Vagina (tissue), 2 donors: ENCODE measurements at regions of chr14 and their contacts with region 1.

Region 1: GRCh38 chr14:63543000-63543825 is at the start of gene PPP2R5E:
- DNase-seq: peak; percentile 99
- H3K4me3 ChIP-seq: peak within 1 kb of the TSS; percentile 76 to 84
- H3K27ac ChIP-seq: peak within 1 kb of the TSS; percentile 80
- H3K4me1 ChIP-seq: peaks cover 18% of the 10 kb centered on the region
- H3K27me3 ChIP-seq: no peaks in the 10 kb centered on the region
- CTCF ChIP-seq: peak in 1 of 3 experiments; percentile 3
- POLR2A ChIP-seq: peak in 1 of 2 donors; percentile 71
- total RNA-seq, gene PPP2R5E: 22.6 TPM

Region 2: DNA sequence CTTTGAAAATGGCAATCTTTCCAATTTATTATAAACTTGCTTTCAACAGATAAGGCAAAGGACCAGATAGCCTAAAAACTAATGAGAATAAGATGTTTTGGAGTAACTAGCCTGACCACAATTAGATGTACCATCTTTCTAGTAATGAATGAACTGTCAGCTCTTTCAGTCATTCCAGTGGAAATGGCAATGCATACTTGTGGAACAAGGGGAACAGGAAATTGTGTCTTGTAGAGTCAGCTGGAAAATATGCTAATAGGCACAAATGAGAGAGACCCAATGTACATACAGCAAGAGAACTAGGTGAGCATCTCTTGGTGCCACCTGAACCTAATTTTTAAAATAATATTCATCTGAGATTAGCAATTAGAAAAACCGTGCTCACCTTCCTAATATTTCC is 148.4 kb before region 1 on chr14:
- intact Hi-C with region 1: loop called (anchors 1 kb)
- DNase-seq: no peak
- H3K4me3 ChIP-seq: no peak overlapping the region
- H3K27ac ChIP-seq: no peak overlapping the region
- H3K4me1 ChIP-seq: no peaks in the 10 kb centered on the region
- H3K27me3 ChIP-seq: no peaks in the 10 kb centered on the region
- CTCF ChIP-seq: no peak
- POLR2A ChIP-seq: no peak

Region 3: GRCh38 chr14:63641473-63642228 is 98.4 kb after region 1 on chr14 and contains the start of gene WDR89:
- intact Hi-C with region 1: loop called (anchors 5 kb)
- DNase-seq: peak; percentile 98 to 100
- H3K4me3 ChIP-seq: peak within 1 kb of the TSS; percentile 62 to 70
- H3K27ac ChIP-seq: peak within 1 kb of the TSS; percentile 95
- H3K4me1 ChIP-seq: peaks cover 19% of the 10 kb centered on the region
- H3K27me3 ChIP-seq: no peaks in the 10 kb centered on the region
- CTCF ChIP-seq: peak in 1 of 3 experiments; percentile 78
- POLR2A ChIP-seq: peak in 1 of 2 donors; percentile 25
- total RNA-seq, gene WDR89: 7.4 TPM

Region 4: GRCh38 chr14:63686951-63687350 is 143.7 kb after region 1 on chr14:
- intact Hi-C with region 1: no loop called
- DNase-seq: no peak
- H3K4me3 ChIP-seq: no peak overlapping the region
- H3K27ac ChIP-seq: no peak overlapping the region
- H3K4me1 ChIP-seq: no peaks in the 10 kb centered on the region
- H3K27me3 ChIP-seq: no peaks in the 10 kb centered on the region
- CTCF ChIP-seq: no peak
- POLR2A ChIP-seq: no peak